ENCODE measurements at regions of chr11 and their contacts with region 1.

Region 1: DNA sequence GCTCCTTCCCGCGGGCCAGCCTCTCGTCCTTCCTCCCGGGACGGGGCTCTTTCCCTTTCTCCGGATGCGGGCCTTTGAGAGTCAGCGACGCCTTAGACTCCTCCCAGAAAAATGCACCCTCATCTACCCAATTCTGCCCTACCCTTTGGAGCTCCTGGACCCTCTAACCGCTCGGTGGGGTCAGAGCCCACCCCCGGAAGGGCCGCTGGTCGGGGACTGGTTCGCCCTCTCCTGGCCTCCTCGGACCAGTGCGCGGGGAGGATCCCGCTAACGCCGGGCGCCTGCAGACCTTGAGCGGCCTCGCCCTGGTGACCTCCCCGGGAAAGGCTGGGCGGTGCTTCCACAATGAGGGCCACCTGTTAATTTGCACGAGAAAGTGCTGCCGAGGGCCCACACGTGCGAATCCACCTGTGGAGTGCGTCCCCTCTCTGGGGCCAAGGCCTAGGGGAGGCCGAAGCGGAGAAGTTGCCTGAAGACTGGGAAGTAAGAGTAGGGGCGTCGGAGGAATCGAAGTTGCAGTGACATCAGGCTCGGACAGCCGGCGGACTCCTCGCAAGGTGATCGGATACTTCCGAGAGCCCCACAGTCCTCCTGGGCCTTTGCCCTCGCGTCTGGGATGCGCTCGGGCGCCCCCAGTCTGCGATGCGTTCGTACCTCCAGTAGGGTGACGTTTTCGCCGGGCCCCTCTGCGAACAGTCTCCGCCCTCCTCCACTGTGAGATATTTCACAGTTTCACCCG is 61.5 kb downstream of the ENDOD1 start:
- DNase-seq: peak; percentile 91 to 95
- H3K4me3 ChIP-seq: peak overlapping the region; percentile 58 to 60
- H3K27ac ChIP-seq: peak overlapping the region; percentile 80 to 92
- H3K4me1 ChIP-seq: peaks cover 0 to 57% (median 20%) of the 10 kb centered on the region in 4 donors
- H3K27me3 ChIP-seq: no peaks in the 10 kb centered on the region
- CTCF ChIP-seq: peak; percentile 83 to 98

Region 2: GRCh38 chr11:94973099-94973968 is 177.8 kb before region 1 on chr11 and contains the starts of genes CWC15 and KDM4D:
- intact Hi-C with region 1: loop called (anchors 5 kb)
- DNase-seq: peak; percentile 94 to 97
- H3K4me3 ChIP-seq: peak within 1 kb of the TSS; percentile 74 to 87
- H3K27ac ChIP-seq: peak within 1 kb of the TSS; percentile 77 to 86
- H3K4me1 ChIP-seq: peaks cover 0 to 16% (median 10%) of the 10 kb centered on the region in 4 donors
- H3K27me3 ChIP-seq: no peaks in the 10 kb centered on the region
- CTCF ChIP-seq: no peak

Region 3: GRCh38 chr11:95050595-95051202 is 100.4 kb before region 1 on chr11:
- intact Hi-C with region 1: no loop called
- DNase-seq: no peak
- H3K4me3 ChIP-seq: no peak overlapping the region
- H3K27ac ChIP-seq: no peak overlapping the region
- H3K4me1 ChIP-seq: no peaks in the 10 kb centered on the region
- H3K27me3 ChIP-seq: peaks cover 0 to 20% of the 10 kb centered on the region in 2 donors
- CTCF ChIP-seq: no peak

Region 4: GRCh38 chr11:95067039-95067840 is 83.9 kb before region 1 on chr11:
- intact Hi-C with region 1: loop called (anchors 5 kb)
- DNase-seq: peak; percentile 80 to 93
- H3K4me3 ChIP-seq: peak overlapping the region; percentile 74 to 81
- H3K27ac ChIP-seq: peak overlapping the region; percentile 90 to 98
- H3K4me1 ChIP-seq: peaks cover 0 to 23% (median 10%) of the 10 kb centered on the region in 4 donors
- H3K27me3 ChIP-seq: no peaks in the 10 kb centered on the region
- CTCF ChIP-seq: peak; percentile 68 to 69

Region 5: DNA sequence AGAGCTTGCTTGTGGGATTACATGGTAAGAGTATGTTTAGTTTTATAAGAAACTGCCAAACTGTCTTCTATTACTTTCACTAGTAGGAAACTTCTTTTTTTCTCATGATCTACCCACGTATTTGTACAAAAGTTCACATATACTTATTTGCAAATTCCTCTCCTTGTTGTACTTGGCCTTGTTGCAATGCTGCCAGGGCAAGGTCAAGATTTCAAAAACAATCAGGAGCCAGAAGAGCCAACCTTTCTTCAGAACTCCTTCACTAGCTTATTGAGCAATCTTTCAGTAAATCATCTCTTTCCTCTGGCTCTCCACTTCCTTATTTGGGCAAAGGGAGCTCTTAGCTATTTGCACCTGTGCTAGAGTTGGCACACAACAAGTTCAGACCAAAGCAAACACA is 74.7 kb before region 1 on chr11:
- intact Hi-C with region 1: loop called (anchors 5 kb)
- DNase-seq: peak; percentile 72 to 92
- H3K4me3 ChIP-seq: no peak overlapping the region
- H3K27ac ChIP-seq: peak overlapping the region; percentile 73 to 81
- H3K4me1 ChIP-seq: peaks cover 4 to 77% (median 51%) of the 10 kb centered on the region in 4 donors
- H3K27me3 ChIP-seq: no peaks in the 10 kb centered on the region
- CTCF ChIP-seq: no peak

Region 6: GRCh38 chr11:95119374-95120060 is 31.6 kb before region 1 on chr11:
- intact Hi-C with region 1: no loop called
- DNase-seq: no peak
- H3K4me3 ChIP-seq: no peak overlapping the region
- H3K27ac ChIP-seq: no peak overlapping the region
- H3K4me1 ChIP-seq: peaks cover 0 to 32% (median 9%) of the 10 kb centered on the region in 4 donors
- H3K27me3 ChIP-seq: no peaks in the 10 kb centered on the region
- CTCF ChIP-seq: no peak

Region 7: DNA sequence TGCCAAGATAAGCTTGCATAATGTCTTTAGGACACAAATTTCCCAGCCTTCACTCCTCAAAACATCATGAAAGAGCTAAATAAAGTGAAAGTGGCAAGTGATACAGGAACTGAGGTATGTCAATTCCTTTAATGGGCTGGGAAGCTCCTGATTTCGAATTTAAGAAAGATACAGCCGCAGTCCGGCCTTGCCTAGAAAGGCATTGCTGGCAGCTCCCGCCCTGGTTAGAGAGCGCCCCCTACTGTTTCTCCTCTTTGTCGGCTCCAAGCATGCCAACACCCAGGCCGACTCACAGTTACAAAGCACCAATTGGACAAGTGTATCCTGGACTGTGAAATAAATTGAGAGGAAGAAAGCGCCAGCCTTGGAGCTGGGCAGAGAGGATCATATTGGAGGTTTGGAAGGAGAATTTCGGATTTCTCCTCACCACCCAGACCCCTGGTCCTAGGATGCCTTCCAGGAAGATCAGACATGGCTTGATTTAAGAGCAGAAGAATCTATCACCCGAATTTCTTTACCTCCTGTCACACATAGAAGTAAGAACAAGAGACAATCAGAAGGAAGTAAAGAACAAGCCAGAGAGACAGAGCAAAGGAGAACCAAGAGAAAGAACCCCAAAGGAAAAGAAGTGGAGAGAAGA is 554.5 kb after region 1 on chr11:
- intact Hi-C with region 1: loop called (anchors 2 kb)
- DNase-seq: peak; percentile 90 to 94
- H3K4me3 ChIP-seq: no peak overlapping the region
- H3K27ac ChIP-seq: peak overlapping the region; percentile 79 to 81
- H3K4me1 ChIP-seq: peaks cover 0 to 65% (median 33%) of the 10 kb centered on the region in 4 donors
- H3K27me3 ChIP-seq: no peaks in the 10 kb centered on the region
- CTCF ChIP-seq: peak; percentile 91 to 94

Measured in tibial artery (tissue), 4 donors.